HEK293T (cell line): ENCODE measurements at regions of chr5 and their contacts with region 1.

Region 1: DNA sequence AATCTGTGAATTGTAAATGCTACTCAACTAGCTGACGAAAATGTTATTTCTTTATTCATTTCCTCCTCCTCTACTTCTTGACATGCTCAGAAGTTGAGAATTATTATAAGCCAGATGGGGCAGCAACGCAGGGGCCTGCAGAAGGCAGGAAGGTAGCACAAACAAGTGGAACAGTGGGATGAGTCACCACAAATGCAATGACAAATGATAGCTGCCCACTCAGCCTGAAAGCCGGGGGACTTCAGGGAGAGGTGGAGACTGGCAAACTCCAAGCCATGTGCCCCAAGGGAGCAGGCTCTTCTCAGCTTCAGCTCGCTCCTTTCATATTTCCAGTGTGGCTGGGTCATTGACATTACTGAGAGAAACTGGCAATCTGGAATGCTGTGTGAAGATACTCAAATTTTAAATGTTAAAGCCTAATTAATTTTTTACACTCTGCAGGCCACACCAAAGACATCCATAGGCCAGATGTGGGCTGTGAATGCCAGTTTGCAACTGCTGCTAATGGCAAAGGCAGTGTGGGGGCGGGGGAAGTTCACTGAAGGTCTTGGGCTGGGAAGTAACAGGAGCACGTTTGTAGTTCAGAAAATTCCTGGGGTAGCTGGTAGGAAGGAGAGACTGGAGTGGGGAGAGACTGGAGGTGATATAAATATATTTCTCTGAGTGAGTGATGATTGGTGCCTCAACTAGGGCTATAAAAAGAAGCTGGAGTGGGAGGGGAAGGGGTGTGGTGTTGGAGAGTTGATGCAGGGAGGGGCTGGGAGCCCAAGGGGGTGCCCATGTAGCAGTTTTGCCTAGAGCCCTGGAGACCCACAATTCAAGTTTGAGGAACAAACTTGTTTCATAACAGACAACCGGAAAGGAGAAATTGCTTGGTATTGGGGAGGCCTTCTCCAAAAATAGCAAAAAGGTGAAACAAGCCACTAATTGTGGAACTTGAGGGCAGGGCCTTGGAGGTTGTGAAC is 20.8 kb upstream of the ADRB2 start:
- DNase-seq: no peak

Region 2: DNA sequence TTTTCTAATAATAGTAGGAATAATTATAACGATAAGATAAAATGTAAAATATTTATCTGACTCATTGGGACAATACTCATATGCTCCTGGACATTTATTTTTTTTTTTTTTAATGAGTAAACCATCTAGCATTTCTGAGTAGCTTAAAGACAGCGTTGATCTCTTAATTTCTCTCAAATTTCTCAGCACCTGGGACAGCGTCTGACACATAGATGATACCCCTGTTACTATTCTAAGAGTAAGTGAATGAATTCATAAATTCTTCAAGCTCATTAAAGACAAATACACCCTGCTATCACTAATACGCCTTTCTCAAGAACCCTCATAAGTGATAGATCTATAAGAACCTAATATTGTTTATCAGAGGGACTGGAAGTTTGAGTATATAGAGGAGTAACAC is 139.3 kb before region 1 on chr5:
- CTCF ChIA-PET with region 1: no interaction called
- POLR2A ChIA-PET with region 1: no interaction called
- DNase-seq: no peak

Region 3: DNA sequence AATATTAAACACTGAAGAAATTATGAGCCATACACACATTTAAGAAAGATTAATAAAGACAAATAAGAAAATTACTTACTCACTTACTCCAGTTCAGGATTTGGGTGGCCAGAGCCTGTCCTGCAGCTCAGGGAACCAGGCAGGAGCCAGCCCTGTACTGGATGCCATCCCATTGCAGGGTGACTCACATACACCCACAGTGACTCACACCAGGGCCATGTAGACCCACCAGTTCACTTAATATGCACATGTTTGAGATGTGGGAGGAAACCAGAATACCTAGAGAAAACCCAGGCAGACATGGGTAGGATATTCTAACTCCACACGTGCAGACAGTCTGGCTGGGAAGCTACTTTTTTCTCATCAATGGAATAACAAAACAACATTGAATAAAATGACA is 28.8 kb before region 1 on chr5:
- CTCF ChIA-PET with region 1: no interaction called
- POLR2A ChIA-PET with region 1: no interaction called
- DNase-seq: no peak

Region 4: DNA sequence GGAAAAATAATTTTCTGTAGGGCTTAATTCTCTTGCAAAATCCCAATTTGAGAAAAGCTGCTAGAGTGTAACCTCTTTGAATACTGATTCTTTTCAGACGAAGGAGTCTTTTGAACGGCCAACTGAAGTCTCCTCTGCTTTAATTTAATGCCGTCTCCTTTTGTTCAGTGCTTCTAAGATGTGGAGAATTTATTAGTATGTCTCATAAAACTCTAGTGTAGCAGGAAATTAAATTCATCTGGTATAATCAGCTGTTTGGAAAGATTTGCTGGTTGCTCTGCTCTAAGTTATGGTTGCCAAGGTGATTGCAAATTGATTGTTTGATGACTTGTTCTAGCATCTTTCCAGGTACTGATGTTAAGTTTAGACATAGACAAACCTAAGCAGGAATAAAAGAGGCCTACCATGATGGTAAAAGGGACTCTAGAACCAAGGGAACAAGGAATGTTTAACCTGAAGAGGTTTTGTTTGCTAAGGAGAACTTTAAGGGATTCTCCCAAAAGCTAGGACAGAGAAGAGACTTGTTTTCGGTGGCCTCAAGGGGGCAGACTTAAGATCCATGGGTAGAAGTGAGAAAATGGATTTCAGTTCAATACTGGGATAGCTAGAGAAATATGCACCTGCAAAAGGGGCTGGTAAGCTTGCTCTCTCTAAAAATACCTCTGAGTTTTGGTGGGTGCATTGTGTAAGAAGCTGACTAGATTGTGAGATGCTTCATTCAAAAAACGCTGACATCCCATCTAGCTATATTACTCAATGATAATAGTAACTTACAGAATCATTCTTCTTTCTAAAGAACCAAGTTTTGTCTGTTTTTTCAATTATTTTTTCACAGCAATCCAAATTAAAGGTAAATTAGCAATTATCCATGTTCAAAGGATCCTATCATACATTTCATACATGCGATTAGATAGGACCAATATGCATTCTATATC is 15.1 kb after region 1 on chr5:
- CTCF ChIA-PET with region 1: interaction called, 18 read pairs
- POLR2A ChIA-PET with region 1: interaction called, 6 read pairs
- DNase-seq: no peak